SK-N-SH (cell line): ENCODE measurements at regions of chr14 and their contacts with region 1.

Region 1: DNA sequence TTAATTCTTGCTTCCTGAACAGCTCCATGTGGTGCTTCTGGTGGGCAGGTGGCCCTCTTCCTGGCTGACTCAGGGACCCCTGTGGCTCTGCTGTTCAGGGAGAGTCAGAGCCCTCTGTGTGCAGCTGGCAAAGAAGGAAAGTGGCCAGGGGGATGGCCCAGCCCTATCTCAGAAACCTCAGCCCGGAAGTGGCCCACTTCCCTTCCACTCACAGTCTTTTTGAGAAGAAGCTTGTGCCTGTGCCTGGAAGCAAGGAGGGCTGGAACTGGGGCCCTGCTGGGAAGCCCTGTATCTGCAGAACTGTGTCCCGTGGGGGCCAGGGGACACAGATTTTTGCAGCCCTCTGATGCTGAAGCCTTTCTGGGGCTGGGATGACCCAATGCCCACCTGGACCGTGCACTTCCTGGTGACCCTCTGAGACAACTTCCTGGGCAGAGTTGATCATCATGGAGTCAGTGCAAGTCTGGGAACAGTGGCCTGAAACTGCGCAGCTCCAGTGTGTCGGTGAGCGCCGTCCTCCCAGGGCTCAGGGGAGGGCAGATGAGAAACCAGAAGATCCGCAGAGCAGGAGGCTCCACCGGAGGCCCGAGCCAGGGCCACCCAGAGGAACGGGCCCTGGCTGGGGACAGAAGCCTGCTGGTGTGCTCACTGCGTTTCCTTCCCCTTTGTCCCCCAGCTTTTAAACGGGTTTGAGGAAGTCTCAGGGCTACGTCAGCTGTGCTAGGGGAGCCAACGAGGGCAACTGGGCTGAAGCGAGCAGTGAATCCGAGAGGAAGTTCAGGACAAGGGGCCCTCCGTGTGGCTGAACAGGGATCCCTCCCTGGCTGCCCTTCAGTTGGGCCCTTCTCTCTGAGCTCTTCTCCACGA is 217.4 kb upstream of the RTL1 start:
- DNase-seq: peak; percentile 27
- H3K4me3 ChIP-seq: no peak overlapping the region
- H3K27ac ChIP-seq: peak overlapping the region in 1 of 2 experiments; percentile 44; a peak in 1 of 4 replicates
- H3K4me1 ChIP-seq: peaks cover 0 to 48% of the 10 kb centered on the region in 2 experiments; a peak in 1 of 4 replicates
- H3K27me3 ChIP-seq: no peaks in the 10 kb centered on the region
- CTCF ChIP-seq: no peak
- EP300 ChIP-seq: no peak
- RAD21 ChIP-seq: no peak

Region 2: GRCh38 chr14:100703386-100704257 is 417.3 kb before region 1 on chr14:
- CTCF ChIA-PET with region 1: no interaction called
- POLR2A ChIA-PET with region 1: no interaction called
- DNase-seq: no peak
- H3K4me3 ChIP-seq: no peak overlapping the region
- H3K27ac ChIP-seq: peak overlapping the region in 1 of 2 experiments; percentile 7; a peak in 1 of 4 replicates
- H3K4me1 ChIP-seq: peaks cover 0 to 40% of the 10 kb centered on the region in 2 experiments; a peak in 1 of 4 replicates
- H3K27me3 ChIP-seq: no peaks in the 10 kb centered on the region
- CTCF ChIP-seq: no peak
- EP300 ChIP-seq: no peak
- RAD21 ChIP-seq: no peak

Region 3: GRCh38 chr14:100988411-100988900 is 132.4 kb before region 1 on chr14:
- CTCF ChIA-PET with region 1: no interaction called
- POLR2A ChIA-PET with region 1: no interaction called
- DNase-seq: no peak
- H3K4me3 ChIP-seq: no peak overlapping the region
- H3K27ac ChIP-seq: no peak overlapping the region
- H3K4me1 ChIP-seq: no peaks in the 10 kb centered on the region; a peak in 1 of 4 replicates
- H3K27me3 ChIP-seq: no peaks in the 10 kb centered on the region
- CTCF ChIP-seq: no peak
- EP300 ChIP-seq: no peak
- RAD21 ChIP-seq: no peak

Region 4: GRCh38 chr14:101235335-101236103 is 114.6 kb after region 1 on chr14:
- CTCF ChIA-PET with region 1: interaction called, 11 read pairs
- POLR2A ChIA-PET with region 1: no interaction called
- DNase-seq: peak; percentile 95
- H3K4me3 ChIP-seq: no peak overlapping the region
- H3K27ac ChIP-seq: peak overlapping the region in 1 of 2 experiments; percentile 58; a peak in 1 of 4 replicates
- H3K4me1 ChIP-seq: peaks cover 0 to 37% of the 10 kb centered on the region in 2 experiments; a peak in 1 of 4 replicates
- H3K27me3 ChIP-seq: no peaks in the 10 kb centered on the region
- CTCF ChIP-seq: peak; percentile 70
- EP300 ChIP-seq: no peak
- RAD21 ChIP-seq: peak; percentile 93